Right cardiac atrium (tissue), 5 donors: ENCODE measurements at regions of chr7 and their contacts with region 1.

Region 1: GRCh38 chr7:87416682-87417587 is 58.5 kb downstream of the ABCB4 start:
- DNase-seq: peak in 2 of 3 donors; percentile 23 to 53
- ATAC-seq: peak; percentile 51
- H3K4me3 ChIP-seq: no peak overlapping the region
- H3K27ac ChIP-seq: no peak overlapping the region
- H3K4me1 ChIP-seq: no peaks in the 10 kb centered on the region
- H3K27me3 ChIP-seq: no peaks in the 10 kb centered on the region

Region 2: GRCh38 chr7:87016606-87017005 is 400.3 kb before region 1 on chr7:
- intact Hi-C with region 1: no loop called
- DNase-seq: no peak
- ATAC-seq: no peak
- H3K4me3 ChIP-seq: no peak overlapping the region
- H3K27ac ChIP-seq: no peak overlapping the region
- H3K4me1 ChIP-seq: no peaks in the 10 kb centered on the region
- H3K27me3 ChIP-seq: no peaks in the 10 kb centered on the region

Region 3: DNA sequence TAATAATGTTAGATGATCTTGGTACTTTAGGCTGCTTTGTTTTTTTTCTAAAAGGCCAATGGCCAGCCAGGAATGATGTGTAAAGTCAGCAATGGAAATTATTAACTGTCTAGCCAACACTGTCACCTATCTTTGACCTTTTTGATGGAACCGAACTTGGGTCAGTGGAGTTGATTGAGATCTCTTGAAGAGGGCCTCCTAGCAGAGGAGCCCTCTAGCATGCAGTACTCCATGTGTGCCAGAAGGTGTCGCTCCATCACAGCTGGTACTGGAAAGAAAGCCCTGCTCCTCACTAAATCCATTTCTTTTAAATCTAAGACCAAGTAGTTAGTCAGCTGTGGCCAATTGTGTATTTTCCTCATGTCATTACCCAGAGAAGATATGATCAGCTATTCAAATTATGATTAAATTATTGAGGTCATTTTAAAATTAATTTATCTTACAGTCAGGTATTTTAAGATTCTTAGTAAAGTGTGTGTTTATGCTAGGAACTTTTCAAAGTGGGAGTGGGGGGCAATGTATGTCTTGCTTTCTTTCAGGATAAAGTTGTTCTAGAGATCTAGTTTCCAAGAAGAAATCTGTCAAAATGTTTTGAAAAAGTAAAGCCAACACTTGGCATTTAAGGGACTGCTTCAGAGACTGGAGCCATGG is 104.6 kb before region 1 on chr7:
- intact Hi-C with region 1: loop called in 3 of 4 experiments (anchors 1 to 5 kb)
- DNase-seq: peak in 2 of 3 donors; percentile 32 to 56
- ATAC-seq: peak in 1 of 2 donors; percentile 88
- H3K4me3 ChIP-seq: no peak overlapping the region
- H3K27ac ChIP-seq: no peak overlapping the region
- H3K4me1 ChIP-seq: no peaks in the 10 kb centered on the region
- H3K27me3 ChIP-seq: no peaks in the 10 kb centered on the region

Region 4: GRCh38 chr7:87483121-87483520 is 66.2 kb after region 1 on chr7:
- intact Hi-C with region 1: no loop called
- DNase-seq: no peak
- ATAC-seq: no peak
- H3K4me3 ChIP-seq: no peak overlapping the region
- H3K27ac ChIP-seq: no peak overlapping the region
- H3K4me1 ChIP-seq: no peaks in the 10 kb centered on the region
- H3K27me3 ChIP-seq: no peaks in the 10 kb centered on the region